Mammary epithelial cell (primary cell): ENCODE measurements at regions of chr11 and their contacts with region 1.

Region 1: GRCh38 chr11:65471410-65471762 is 27.5 kb upstream of the MALAT1 start:
- DNase-seq: no peak
- H3K4me3 ChIP-seq: no peak overlapping the region
- H3K27ac ChIP-seq: peak overlapping the region; percentile 95
- H3K4me1 ChIP-seq: peaks cover 20% of the 10 kb centered on the region
- H3K27me3 ChIP-seq: no peaks in the 10 kb centered on the region
- CTCF ChIP-seq: peak; percentile 55 to 62

Region 2: DNA sequence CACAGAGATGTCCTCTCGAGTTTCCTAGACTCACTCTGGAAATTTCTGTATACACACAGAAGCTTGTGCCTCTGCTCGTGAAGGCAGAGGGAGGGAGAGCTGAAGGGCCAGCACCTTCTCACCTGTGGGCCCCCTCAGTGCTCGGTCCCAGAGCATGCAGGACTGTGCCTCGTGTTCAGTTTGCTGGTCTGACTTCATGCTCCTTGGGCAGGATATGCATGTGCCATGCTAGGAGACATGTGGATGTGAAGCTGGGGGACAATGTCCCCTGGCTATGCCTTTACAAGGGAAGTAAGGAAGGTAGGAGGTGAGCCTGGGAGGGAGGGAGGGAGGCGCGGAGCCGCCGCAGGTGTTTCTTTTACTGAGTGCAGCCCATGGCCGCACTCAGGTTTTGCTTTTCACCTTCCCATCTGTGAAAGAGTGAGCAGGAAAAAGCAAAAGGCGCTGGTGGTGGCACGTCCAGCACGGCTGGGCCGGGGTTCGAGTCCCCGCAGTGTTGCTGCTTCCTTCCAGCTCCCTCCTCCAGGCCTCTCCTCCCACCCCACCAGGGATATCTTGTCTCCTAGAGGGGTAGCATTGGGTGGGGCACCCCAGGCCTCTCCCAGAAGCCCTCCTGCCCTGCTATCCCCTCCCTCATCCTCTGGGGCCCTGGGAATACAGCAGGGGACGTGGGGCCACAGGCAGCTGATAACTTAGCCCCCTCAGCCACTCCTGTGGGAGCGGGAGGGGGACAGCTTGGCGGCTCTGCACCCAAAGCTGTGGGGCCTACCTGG is 26.1 kb before region 1 on chr11:
- CTCF ChIA-PET with region 1: interaction called, 20 read pairs
- dilution Hi-C with region 1: no loop called
- in situ Hi-C with region 1: no loop called
- intact Hi-C with region 1: no loop called
- DNase-seq: peak; percentile 41
- H3K4me3 ChIP-seq: no peak overlapping the region
- H3K27ac ChIP-seq: no peak overlapping the region
- H3K4me1 ChIP-seq: peaks cover 12% of the 10 kb centered on the region
- H3K27me3 ChIP-seq: no peaks in the 10 kb centered on the region
- CTCF ChIP-seq: no peak

Region 3: GRCh38 chr11:65506770-65507505 is 35.6 kb after region 1 on chr11:
- CTCF ChIA-PET with region 1: interaction called, 7 read pairs
- dilution Hi-C with region 1: no loop called
- in situ Hi-C with region 1: loop called in 1 of 2 experiments (anchors 5 kb)
- intact Hi-C with region 1: loop called (anchors 1 kb)
- DNase-seq: no peak
- H3K4me3 ChIP-seq: peak overlapping the region in 1 of 3 experiments; percentile 6
- H3K27ac ChIP-seq: peak overlapping the region; percentile 81
- H3K4me1 ChIP-seq: peaks cover 17% of the 10 kb centered on the region
- H3K27me3 ChIP-seq: no peaks in the 10 kb centered on the region
- CTCF ChIP-seq: no peak